ENCODE measurements at regions of chr22 and their contacts with region 1.

Region 1: GRCh38 chr22:34587831-34588251 is 478.1 kb upstream of the ISX start:
- DNase-seq: no peak
- ATAC-seq: no peak
- H3K4me3 ChIP-seq: no peak overlapping the region
- H3K4me3 Mint-ChIP-seq: no peak overlapping the region
- H3K27ac ChIP-seq: no peak overlapping the region
- H3K27ac Mint-ChIP-seq: no peak overlapping the region
- H3K4me1 ChIP-seq: no peaks in the 10 kb centered on the region
- H3K4me1 Mint-ChIP-seq: no peaks in the 10 kb centered on the region
- H3K27me3 ChIP-seq: no peaks in the 10 kb centered on the region
- H3K27me3 Mint-ChIP-seq: no peaks in the 10 kb centered on the region
- CTCF ChIP-seq: no peak

Region 2: DNA sequence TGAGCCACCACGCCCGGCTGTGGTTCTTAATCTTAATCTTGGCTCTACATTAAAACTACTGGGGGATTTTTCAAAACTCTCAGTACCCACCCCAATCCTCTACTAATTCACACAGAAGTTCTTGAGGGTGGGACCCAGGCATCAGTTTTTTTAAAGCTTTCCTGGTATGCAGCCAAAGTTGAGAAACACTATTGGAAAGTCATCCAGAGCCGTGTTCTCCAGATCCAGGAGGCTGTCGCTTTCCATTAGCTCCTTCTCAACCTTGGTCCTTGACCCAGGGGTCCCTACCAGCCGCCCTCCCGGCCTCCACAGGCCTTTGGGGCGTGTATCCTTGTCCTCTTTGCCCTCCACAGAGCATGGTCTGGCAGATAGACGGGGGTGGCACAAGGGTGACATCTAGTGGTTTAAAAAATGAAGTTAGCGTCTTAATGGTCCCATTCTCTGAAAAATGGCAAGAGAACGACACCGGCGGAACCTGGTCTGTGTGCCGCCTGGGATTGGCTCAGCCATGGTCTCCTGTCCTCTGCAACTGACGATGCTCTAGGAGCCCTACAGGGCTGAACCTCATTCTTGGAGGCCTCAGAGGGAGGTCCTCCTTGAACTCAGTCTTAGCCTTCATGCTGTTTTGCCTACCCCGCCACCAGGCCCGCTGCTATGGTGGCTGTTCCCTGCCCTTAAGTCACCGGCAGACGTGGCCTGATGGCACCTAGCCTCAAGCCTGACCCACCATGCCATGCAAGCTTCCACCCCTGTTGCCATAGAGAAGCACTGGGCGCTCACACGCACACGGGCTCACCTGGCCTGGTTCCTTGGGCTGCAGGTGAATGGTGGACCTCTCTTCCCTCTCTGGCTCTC is 1377.7 kb before region 1 on chr22:
- intact Hi-C with region 1: loop called (anchors 10 kb)
- DNase-seq: peak in 1 of 2 donors; percentile 10
- ATAC-seq: peak in 2 of 3 donors; percentile 25 to 38
- H3K4me3 ChIP-seq: no peak overlapping the region
- H3K4me3 Mint-ChIP-seq: no peak overlapping the region
- H3K27ac ChIP-seq: no peak overlapping the region
- H3K27ac Mint-ChIP-seq: no peak overlapping the region
- H3K4me1 ChIP-seq: no peaks in the 10 kb centered on the region
- H3K4me1 Mint-ChIP-seq: no peaks in the 10 kb centered on the region
- H3K27me3 ChIP-seq: no peaks in the 10 kb centered on the region
- H3K27me3 Mint-ChIP-seq: peaks cover 13 to 22% of the 10 kb centered on the region in 2 donors
- CTCF ChIP-seq: no peak

Region 3: GRCh38 chr22:34623580-34623979 is 35.7 kb after region 1 on chr22:
- intact Hi-C with region 1: no loop called
- DNase-seq: no peak
- ATAC-seq: no peak
- H3K4me3 ChIP-seq: no peak overlapping the region
- H3K4me3 Mint-ChIP-seq: no peak overlapping the region
- H3K27ac ChIP-seq: no peak overlapping the region
- H3K27ac Mint-ChIP-seq: no peak overlapping the region
- H3K4me1 ChIP-seq: no peaks in the 10 kb centered on the region
- H3K4me1 Mint-ChIP-seq: no peaks in the 10 kb centered on the region
- H3K27me3 ChIP-seq: no peaks in the 10 kb centered on the region
- H3K27me3 Mint-ChIP-seq: no peaks in the 10 kb centered on the region
- CTCF ChIP-seq: no peak

Measured in natural killer cell (primary cell).